ENCODE measurements at regions of chr14 and their contacts with region 1.

Region 1: GRCh38 chr14:55160989-55161388 is 30.4 kb downstream of the DLGAP5 start:
- DNase-seq: no peak
- ATAC-seq: no peak
- H3K4me3 ChIP-seq: no peak overlapping the region
- H3K27ac ChIP-seq: no peak overlapping the region
- H3K4me1 ChIP-seq: no peaks in the 10 kb centered on the region
- H3K27me3 ChIP-seq: no peaks in the 10 kb centered on the region

Region 2: GRCh38 chr14:55088356-55088755 is 72.6 kb before region 1 on chr14:
- intact Hi-C with region 1: loop called (anchors 2 kb)
- DNase-seq: no peak
- ATAC-seq: no peak
- H3K4me3 ChIP-seq: no peak overlapping the region
- H3K27ac ChIP-seq: no peak overlapping the region
- H3K4me1 ChIP-seq: no peaks in the 10 kb centered on the region
- H3K27me3 ChIP-seq: no peaks in the 10 kb centered on the region

Region 3: GRCh38 chr14:55094321-55095157 is 66.5 kb before region 1 on chr14:
- intact Hi-C with region 1: loop called (anchors 2 kb)
- DNase-seq: no peak
- ATAC-seq: no peak
- H3K4me3 ChIP-seq: no peak overlapping the region
- H3K27ac ChIP-seq: no peak overlapping the region
- H3K4me1 ChIP-seq: no peaks in the 10 kb centered on the region
- H3K27me3 ChIP-seq: no peaks in the 10 kb centered on the region

Measured in aorta (tissue), 5 donors.